Left ventricle myocardium superior (tissue), 1 donor: ENCODE measurements at regions of chr6 and their contacts with region 1.

Region 1: GRCh38 chr6:37018198-37019064 is 13.0 kb downstream of the FGD2 start:
- DNase-seq: peak; percentile 92
- ATAC-seq: peak; percentile 96

Region 2: GRCh38 chr6:36759148-36759759 is 259.2 kb before region 1 on chr6:
- intact Hi-C with region 1: loop called (anchors 5 kb)
- DNase-seq: peak; percentile 88
- ATAC-seq: peak; percentile 89

Region 3: GRCh38 chr6:36788768-36789167 is 229.7 kb before region 1 on chr6:
- intact Hi-C with region 1: no loop called
- DNase-seq: no peak
- ATAC-seq: no peak

Region 4: DNA sequence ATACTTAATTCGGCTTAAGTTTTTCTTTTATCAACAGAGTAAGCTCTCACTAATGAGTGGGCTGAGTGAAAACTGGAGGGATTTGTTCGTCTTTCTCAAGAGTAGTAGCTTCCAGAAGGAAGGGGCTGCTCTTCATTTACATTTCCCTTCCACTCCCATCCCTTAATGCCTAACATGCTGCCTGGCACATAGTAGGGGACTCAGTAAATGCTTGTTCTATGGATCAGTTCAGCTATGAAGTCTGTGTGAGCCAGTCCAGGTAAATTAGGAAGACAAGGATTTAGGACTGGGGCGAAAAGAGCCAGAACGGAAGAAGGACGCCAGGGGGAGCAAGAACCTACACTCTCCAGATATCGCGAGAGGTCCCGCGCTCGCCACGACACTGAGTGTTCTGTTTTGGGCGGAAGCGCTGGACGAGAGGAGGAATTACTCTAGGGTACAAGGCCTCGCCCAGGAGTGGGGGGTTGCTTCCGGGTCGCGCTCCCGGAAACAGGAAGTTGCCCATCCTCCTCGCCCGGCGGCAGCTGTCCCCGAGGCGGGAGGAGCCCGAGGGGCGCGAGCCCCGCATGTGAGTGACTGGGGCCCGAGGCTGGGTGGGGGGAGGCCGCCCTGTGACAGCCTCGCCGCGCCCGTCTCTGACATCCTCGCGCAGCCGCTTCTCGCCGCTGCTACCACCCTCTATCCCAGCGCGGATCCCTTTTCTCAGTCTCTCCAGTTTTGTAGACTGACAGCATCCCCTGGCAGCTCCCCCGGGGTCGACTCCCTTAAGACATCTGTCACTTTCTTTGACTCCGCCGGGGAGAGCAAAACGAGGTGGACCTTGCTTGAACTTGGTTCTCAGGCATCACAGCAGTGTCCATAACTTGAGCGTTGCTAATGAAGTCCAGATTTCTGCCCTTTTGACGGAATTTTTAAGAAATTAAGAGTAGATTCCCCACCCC is 132.7 kb before region 1 on chr6 and contains the start of gene C6orf89:
- intact Hi-C with region 1: loop called (anchors 5 kb)
- DNase-seq: peak; percentile 98
- ATAC-seq: peak; percentile 99
- total RNA-seq, gene C6orf89: 76.6 TPM

Region 5: DNA sequence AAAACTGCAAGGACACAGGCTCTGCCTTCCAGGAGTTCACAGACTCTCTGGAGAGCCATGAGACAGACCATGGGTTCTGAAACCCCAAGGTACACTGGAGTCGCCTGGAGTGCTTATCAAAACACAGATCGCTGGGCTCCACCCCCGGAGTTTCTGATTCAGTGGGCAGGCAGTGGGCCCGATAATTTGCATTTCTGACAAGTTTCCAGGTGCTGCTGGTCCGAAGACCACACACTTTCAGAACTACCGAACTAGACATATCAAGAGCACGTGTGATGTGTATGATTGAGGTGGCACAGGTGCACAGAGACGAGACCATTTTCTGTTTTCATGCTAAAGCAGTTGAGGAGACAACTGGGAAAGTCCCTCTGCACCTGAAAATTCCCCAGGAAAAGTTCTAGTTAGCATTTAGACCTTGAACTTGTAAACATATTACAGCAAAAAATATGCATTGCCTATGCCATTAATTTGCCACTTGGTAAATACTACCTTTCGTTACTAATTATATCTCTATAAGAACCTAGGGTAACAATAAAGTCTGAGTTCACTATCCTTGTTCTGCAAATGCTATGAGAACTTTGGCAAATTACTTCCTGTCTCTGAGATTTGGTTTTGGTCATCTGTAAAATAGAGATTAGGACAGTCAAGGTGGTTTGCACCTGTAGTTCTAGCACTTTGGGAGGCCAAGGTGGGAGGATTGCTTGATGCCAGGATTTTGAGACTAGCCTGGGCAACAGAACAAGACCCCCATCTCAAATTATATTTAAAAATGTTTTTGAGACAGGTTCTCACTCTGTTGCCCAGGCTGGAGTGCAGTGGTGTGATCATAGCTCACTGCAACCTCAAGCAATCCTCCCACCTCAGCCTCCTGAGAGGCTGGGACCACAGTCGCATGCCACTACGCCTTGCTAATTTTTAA is 137.2 kb after region 1 on chr6:
- intact Hi-C with region 1: no loop called
- DNase-seq: no peak
- ATAC-seq: no peak

Region 6: GRCh38 chr6:37257634-37258404 is 239.4 kb after region 1 on chr6 and contains the starts of genes TBC1D22B and TMEM217:
- intact Hi-C with region 1: no loop called
- DNase-seq: peak; percentile 97
- ATAC-seq: peak; percentile 100
- total RNA-seq, gene TBC1D22B: 6.3 TPM
- total RNA-seq, gene TMEM217: not detected